H1 (cell line): ENCODE measurements at regions of chr14 and their contacts with region 1.

Region 1: DNA sequence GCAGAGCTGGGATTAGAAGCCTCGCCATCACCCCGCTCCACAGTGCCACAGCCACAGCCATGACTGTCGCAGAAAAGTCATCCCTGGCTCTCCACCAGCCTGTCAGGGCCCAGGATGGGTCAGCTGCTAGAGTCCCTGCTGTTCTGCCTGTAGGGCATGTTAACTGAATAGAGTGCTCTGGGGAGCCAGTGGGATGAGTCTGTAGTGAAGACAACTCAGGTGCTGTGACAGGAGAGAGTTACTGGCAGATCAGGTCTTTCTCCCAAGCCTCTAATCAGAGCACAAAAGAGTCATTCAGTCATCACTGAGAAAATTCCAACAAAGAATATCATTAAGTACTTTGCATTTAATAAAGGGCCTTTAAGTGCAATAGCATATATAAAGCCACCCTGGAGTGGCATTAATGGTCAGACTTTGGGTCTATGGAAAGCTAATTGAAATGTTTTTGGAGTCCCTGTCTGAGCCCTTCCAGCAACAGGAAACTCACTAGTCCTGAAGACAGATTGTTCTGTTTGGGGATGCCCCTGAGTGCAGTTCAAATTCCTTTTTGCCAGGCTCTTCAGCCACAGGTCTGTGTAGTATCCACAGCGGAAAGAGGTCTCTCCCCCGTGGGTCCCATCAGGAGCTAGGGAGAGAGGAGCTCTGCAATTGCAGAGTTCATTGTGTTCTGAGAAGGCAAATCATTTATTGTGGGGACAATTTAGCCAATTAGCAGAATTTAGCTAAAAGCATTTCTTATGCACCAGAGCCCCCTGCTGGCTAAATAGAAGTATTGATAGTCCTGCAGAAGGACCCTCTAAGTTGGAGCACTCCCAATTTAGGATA is 45.2 kb upstream of the C14orf132 start:
- DNase-seq: peak; percentile 60 to 78
- H3K4me3 ChIP-seq: peak overlapping the region in 2 of 4 experiments; percentile 1 to 4; a peak in 2 of 8 replicates
- H3K27ac ChIP-seq: peak overlapping the region; percentile 30; the same call in 1 of the 2 replicates
- H3K4me1 ChIP-seq: peaks cover 7 to 17% (median 11%) of the 10 kb centered on the region in 4 experiments
- H3K27me3 ChIP-seq: no peaks in the 10 kb centered on the region
- CTCF ChIP-seq: peak in 2 of 3 experiments; percentile 78 to 87; a peak in 3 of 4 replicates
- EP300 ChIP-seq: no peak; a peak in 1 of 3 replicates
- POLR2A ChIP-seq: no peak
- RAD21 ChIP-seq: peak; percentile 96 to 97

Region 2: GRCh38 chr14:95545179-95546168 is 448.5 kb before region 1 on chr14:
- CTCF ChIA-PET with region 1: interaction called, 11 read pairs
- POLR2A ChIA-PET with region 1: no interaction called
- DNase-seq: no peak
- H3K4me3 ChIP-seq: no peak overlapping the region
- H3K27ac ChIP-seq: no peak overlapping the region
- H3K4me1 ChIP-seq: no peaks in the 10 kb centered on the region; a peak in 1 of 7 replicates
- H3K27me3 ChIP-seq: no peaks in the 10 kb centered on the region
- CTCF ChIP-seq: no peak
- EP300 ChIP-seq: no peak
- POLR2A ChIP-seq: no peak
- RAD21 ChIP-seq: no peak

Region 3: DNA sequence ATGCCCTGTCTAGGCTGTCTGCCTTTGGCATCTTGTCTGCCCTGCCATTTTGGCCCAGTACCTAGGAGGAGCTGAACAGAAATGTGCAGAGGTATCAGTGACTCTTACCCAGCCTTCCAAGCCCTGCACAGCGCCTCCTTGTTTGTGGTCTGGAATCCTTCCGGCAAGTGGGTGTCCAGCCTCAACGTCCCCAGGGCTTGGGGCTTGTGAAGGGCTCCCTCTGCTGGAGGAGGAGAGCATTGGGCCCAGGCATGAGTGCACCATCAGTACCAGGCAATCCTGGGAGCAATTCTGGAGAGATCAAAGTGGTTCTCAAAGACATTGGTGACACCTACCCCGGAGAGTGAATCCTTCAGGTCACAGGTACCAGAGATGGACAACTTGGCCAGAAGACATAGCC is 310.2 kb before region 1 on chr14:
- CTCF ChIA-PET with region 1: interaction called, 19 read pairs
- POLR2A ChIA-PET with region 1: no interaction called
- DNase-seq: peak in 1 of 2 experiments; percentile 74
- H3K4me3 ChIP-seq: no peak overlapping the region
- H3K27ac ChIP-seq: no peak overlapping the region
- H3K4me1 ChIP-seq: peaks cover 6 to 13% (median 9%) of the 10 kb centered on the region in 4 experiments
- H3K27me3 ChIP-seq: peaks cover 0 to 3% (median 0%) of the 10 kb centered on the region in 4 experiments; a peak in 3 of 7 replicates
- CTCF ChIP-seq: peak; percentile 94 to 97 (median 95)
- EP300 ChIP-seq: no peak
- POLR2A ChIP-seq: no peak
- RAD21 ChIP-seq: peak; percentile 91 to 94

Region 4: GRCh38 chr14:95876761-95877538 is 117.0 kb before region 1 on chr14 and contains the start of gene TUNAR:
- CTCF ChIA-PET with region 1: interaction called, 13 read pairs
- POLR2A ChIA-PET with region 1: interaction called, 6 read pairs
- DNase-seq: peak in 1 of 2 experiments; percentile 70
- H3K4me3 ChIP-seq: peak within 1 kb of the TSS; percentile 47 to 77 (median 66)
- H3K27ac ChIP-seq: no peak within 1 kb of the TSS
- H3K4me1 ChIP-seq: peaks cover 9 to 23% (median 19%) of the 10 kb centered on the region in 4 experiments; a peak in 6 of 7 replicates
- H3K27me3 ChIP-seq: peaks cover 0 to 10% (median 6%) of the 10 kb centered on the region in 4 experiments; a peak in 5 of 7 replicates
- CTCF ChIP-seq: no peak
- EP300 ChIP-seq: no peak
- POLR2A ChIP-seq: no peak; a peak in 1 of 3 replicates
- RAD21 ChIP-seq: no peak
- total RNA-seq, gene TUNAR: 63.7 and 63.9 TPM in 2 replicates

Region 5: DNA sequence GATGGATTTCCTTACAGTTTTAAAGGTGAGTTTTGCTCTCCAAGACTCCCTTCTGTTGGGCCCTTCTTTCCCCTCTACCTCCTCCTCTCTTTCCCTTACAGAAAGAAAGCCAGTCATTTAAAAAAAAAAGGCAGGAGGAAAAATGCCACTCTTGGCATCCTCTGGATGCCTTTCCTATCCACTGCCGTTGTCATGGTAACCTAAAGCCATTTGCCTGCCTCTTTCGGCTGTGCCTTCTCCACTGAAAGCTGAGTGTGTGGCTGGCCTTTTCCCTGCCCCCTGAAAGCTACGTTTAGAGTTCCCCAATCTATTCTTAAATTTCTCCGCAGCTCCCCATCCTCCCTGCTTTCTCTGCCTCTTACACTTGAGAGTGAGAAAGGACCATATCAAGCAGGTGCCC is 50.3 kb before region 1 on chr14:
- CTCF ChIA-PET with region 1: interaction called, 11 read pairs
- POLR2A ChIA-PET with region 1: interaction called, 18 read pairs
- DNase-seq: no peak
- H3K4me3 ChIP-seq: no peak overlapping the region
- H3K27ac ChIP-seq: no peak overlapping the region
- H3K4me1 ChIP-seq: peaks cover 0 to 12% (median 7%) of the 10 kb centered on the region in 4 experiments; a peak in 5 of 7 replicates
- H3K27me3 ChIP-seq: no peaks in the 10 kb centered on the region
- CTCF ChIP-seq: no peak
- EP300 ChIP-seq: no peak
- POLR2A ChIP-seq: no peak
- RAD21 ChIP-seq: no peak

Region 6: DNA sequence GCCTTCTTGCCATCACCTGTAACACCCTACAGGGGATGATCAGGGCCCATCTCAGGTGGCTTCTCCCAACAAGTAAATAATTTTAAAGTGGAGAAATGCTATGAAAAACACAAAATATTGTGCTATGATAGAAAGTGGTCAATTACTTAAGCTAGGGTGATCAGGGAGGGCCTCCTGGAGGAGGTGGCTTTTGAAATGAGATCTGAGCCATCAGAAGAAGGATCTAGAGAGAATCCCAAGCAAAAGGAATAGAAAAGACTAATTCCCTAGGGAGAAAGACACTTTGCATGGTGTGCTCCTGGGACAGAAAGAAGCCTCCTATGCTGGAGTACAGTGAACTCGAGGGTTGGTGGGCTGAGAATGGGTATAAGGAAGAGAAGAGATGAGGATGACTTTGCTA is 37.7 kb after region 1 on chr14:
- CTCF ChIA-PET with region 1: no interaction called
- POLR2A ChIA-PET with region 1: no interaction called
- DNase-seq: no peak
- H3K4me3 ChIP-seq: no peak overlapping the region
- H3K27ac ChIP-seq: no peak overlapping the region
- H3K4me1 ChIP-seq: no peaks in the 10 kb centered on the region; a peak in 1 of 7 replicates
- H3K27me3 ChIP-seq: no peaks in the 10 kb centered on the region; a peak in 1 of 7 replicates
- CTCF ChIP-seq: no peak
- EP300 ChIP-seq: no peak
- POLR2A ChIP-seq: no peak
- RAD21 ChIP-seq: no peak

Region 7: GRCh38 chr14:96053600-96054381 is 59.8 kb after region 1 on chr14:
- CTCF ChIA-PET with region 1: interaction called, 19 read pairs
- POLR2A ChIA-PET with region 1: no interaction called
- DNase-seq: peak in 1 of 2 experiments; percentile 35
- H3K4me3 ChIP-seq: no peak overlapping the region
- H3K27ac ChIP-seq: no peak overlapping the region
- H3K4me1 ChIP-seq: no peaks in the 10 kb centered on the region; a peak in 2 of 7 replicates
- H3K27me3 ChIP-seq: no peaks in the 10 kb centered on the region
- CTCF ChIP-seq: no peak
- EP300 ChIP-seq: no peak
- POLR2A ChIP-seq: no peak
- RAD21 ChIP-seq: no peak